BJ (cell line): ENCODE measurements at regions of chr1 and their contacts with region 1.

Region 1: GRCh38 chr1:10378081-10378841 is 20.6 kb upstream of the PGD start:
- DNase-seq: no peak
- H3K4me3 ChIP-seq: no peak overlapping the region
- H3K27me3 ChIP-seq: no peaks in the 10 kb centered on the region
- CTCF ChIP-seq: no peak

Region 2: GRCh38 chr1:10054465-10054864 is 323.8 kb before region 1 on chr1:
- CTCF ChIA-PET with region 1: no interaction called
- POLR2A ChIA-PET with region 1: interaction called, 13 read pairs
- DNase-seq: no peak
- H3K4me3 ChIP-seq: no peak overlapping the region
- H3K27me3 ChIP-seq: no peaks in the 10 kb centered on the region
- CTCF ChIP-seq: no peak

Region 3: GRCh38 chr1:10398734-10399623 is 20.7 kb after region 1 on chr1 and contains the start of gene PGD:
- CTCF ChIA-PET with region 1: interaction called, 10 read pairs
- POLR2A ChIA-PET with region 1: no interaction called
- DNase-seq: peak; percentile 83
- H3K4me3 ChIP-seq: peak within 1 kb of the TSS; percentile 78
- H3K27me3 ChIP-seq: no peaks in the 10 kb centered on the region
- CTCF ChIP-seq: peak; percentile 20; the same call in 1 of the 2 replicates
- polyA plus RNA-seq, gene PGD: 78.3 and 88.8 TPM in 2 replicates

Region 4: DNA sequence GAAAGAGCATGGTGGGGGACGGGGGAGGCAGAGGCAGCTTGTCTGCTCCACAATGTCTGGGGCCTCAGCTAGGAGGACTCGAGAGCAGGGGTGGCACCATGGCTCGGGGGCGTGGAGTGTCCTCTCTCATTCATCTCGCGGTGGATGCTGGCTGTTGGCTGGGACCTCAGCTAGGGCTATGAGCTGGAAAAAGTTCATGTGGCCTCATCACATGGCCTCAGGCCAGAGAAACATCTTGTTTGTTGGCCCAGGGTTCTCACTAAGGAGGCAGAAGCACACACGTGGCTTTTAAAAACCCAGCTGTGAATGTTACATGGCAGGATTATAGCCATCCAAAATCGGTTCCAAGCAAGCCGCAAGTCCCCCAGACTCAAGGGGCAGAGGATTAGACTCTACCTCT is 45.8 kb after region 1 on chr1:
- CTCF ChIA-PET with region 1: interaction called, 40 read pairs
- POLR2A ChIA-PET with region 1: no interaction called
- DNase-seq: no peak
- H3K4me3 ChIP-seq: no peak overlapping the region
- H3K27me3 ChIP-seq: no peaks in the 10 kb centered on the region
- CTCF ChIP-seq: peak; percentile 33; the same call in 1 of the 2 replicates

Region 5: DNA sequence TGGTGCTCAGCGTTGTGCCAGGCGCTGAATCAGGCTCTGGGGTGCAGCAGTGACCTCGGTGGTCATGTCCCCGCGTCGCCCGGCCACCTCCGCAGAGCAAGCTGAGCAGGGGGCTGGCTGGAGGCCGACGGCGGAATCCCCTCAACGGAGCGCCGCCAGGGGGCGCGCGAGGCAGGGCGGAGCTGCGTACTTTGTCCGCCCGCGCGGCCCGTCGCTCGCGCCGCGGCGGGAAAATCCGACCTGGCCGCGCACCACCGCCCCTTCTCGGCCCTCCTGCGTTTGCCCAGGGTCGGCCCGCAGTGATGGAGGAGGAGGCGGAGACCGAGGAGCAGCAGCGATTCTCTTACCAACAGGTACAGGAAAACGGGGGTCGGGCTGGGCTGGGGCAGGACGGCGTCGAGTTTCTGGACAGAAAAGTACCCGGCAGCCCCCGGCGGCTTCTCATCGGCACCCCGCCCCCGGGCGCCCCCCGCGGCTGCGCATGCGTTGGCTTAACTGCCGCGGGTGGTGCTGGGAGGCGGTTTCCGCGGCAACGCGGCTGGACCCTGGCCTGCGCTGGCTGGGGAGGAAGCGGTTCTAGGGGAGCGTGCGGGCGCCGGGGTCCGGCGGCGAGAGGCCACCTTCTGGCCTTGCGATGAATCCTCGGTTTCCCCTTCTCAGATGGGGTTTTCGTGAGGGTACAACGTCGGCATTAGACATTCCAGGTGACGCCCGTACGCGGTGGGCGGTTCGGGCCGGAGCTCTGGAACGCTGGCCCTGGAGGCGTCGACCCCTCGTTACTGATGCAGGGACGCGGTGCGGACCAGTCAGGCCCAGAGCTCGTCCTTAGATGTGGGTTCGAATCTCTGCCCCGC is 52.2 kb after region 1 on chr1 and contains the start of gene CENPS:
- CTCF ChIA-PET with region 1: interaction called, 40 read pairs
- POLR2A ChIA-PET with region 1: no interaction called
- DNase-seq: no peak
- H3K4me3 ChIP-seq: peak within 1 kb of the TSS; percentile 80
- H3K27me3 ChIP-seq: no peaks in the 10 kb centered on the region
- CTCF ChIP-seq: peak; percentile 76
- polyA plus RNA-seq, gene CENPS: 8.5 and 9.6 TPM in 2 replicates